HCT116 (cell line): ENCODE measurements at regions of chr12 and their contacts with region 1.

Region 1: GRCh38 chr12:103571286-103571685 is 15.8 kb upstream of the STAB2 start:
- DNase-seq: peak; percentile 26
- ATAC-seq: peak; percentile 73
- H3K4me3 ChIP-seq: peak overlapping the region; percentile 24 to 47
- H3K27ac ChIP-seq: no peak overlapping the region
- H3K4me1 ChIP-seq: peaks cover 4 to 15% of the 10 kb centered on the region in 2 experiments; a peak in 3 of 4 replicates
- H3K27me3 ChIP-seq: no peaks in the 10 kb centered on the region
- CTCF ChIP-seq: peak in 1 of 3 experiments; percentile 31; a peak in 2 of 6 replicates
- POLR2A ChIP-seq: no peak
- RAD21 ChIP-seq: no peak

Region 2: DNA sequence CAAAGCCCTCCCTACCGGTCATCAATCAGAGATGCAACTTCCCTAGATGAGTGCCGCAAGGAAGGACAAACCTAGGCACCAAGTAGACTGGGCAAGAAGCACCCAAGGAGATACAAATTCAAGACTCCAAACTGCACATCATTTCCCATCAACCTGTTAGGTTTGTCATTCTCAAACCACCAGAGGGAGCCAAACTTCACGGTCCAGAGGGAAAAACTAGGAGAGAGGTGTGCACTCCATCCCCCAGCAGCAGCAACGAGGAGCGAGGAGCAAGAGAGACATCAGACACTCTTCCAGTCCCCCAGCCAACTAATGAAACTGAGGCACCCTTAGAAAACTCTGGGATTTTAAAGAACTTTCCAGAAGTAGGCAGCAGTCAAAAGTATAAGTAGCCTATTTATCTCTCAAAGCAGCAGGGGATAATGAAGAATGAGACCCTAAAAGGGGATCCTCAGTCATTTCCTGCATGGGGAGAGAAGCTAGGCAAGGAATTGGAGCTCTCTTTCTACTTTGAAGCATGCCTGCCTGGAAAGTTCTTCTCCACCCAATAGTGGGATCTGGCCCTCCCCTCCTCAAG is 306.7 kb after region 1 on chr12:
- CTCF ChIA-PET with region 1: no interaction called
- POLR2A ChIA-PET with region 1: no interaction called
- RAD21 ChIA-PET with region 1: no interaction called
- intact Hi-C with region 1: loop called (anchors 10 kb)
- DNase-seq: peak; percentile 64
- ATAC-seq: peak; percentile 99
- H3K4me3 ChIP-seq: no peak overlapping the region
- H3K27ac ChIP-seq: no peak overlapping the region
- H3K4me1 ChIP-seq: peaks cover 0 to 4% of the 10 kb centered on the region in 2 experiments; a peak in 1 of 4 replicates
- H3K27me3 ChIP-seq: no peaks in the 10 kb centered on the region
- CTCF ChIP-seq: peak; percentile 71 to 87 (median 79)
- POLR2A ChIP-seq: no peak
- RAD21 ChIP-seq: peak; percentile 92

Region 3: GRCh38 chr12:104999347-104999685 is 1428.0 kb after region 1 on chr12:
- CTCF ChIA-PET with region 1: no interaction called
- POLR2A ChIA-PET with region 1: no interaction called
- RAD21 ChIA-PET with region 1: no interaction called
- intact Hi-C with region 1: no loop called
- DNase-seq: no peak
- ATAC-seq: no peak
- H3K4me3 ChIP-seq: no peak overlapping the region
- H3K27ac ChIP-seq: no peak overlapping the region
- H3K4me1 ChIP-seq: no peaks in the 10 kb centered on the region
- H3K27me3 ChIP-seq: no peaks in the 10 kb centered on the region
- CTCF ChIP-seq: no peak
- POLR2A ChIP-seq: no peak
- RAD21 ChIP-seq: no peak